ENCODE measurements at regions of chr4 and their contacts with region 1.

Region 1: GRCh38 chr4:3122081-3122563 is 47.6 kb downstream of the HTT start:
- DNase-seq: no peak

Region 2: DNA sequence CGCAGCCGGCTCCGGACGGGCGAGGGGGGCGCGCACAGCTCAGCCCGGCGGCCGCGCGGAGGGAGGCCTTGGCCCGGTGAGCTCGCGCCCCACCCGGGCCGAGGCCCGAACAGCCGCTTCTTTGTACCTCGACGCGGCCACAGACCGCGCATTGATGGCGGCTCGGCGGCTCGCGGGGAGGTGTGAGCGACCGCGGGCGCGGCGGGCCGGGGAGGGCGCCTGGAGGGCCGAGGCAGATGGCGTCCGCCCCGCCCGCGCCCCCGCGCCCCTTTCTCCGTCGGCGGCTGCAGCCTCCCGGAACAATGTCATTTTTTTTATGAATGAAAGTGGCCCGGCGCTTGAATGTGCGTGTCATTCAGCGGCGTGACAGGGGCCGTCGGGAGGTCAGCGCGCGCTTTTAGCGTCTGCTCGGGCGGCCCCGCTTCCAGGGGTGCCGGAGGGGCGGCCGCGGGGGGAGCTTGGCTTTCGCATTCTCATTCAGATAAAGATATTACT is 1327.3 kb before region 1 on chr4:
- intact Hi-C with region 1: loop called in 1 of 2 experiments (anchors 5 kb)
- DNase-seq: no peak